Activated B cell treated with CpG ODN at 0.5 μM for 24 hours (primary cell): ENCODE measurements at regions of chr19 and their contacts with region 1.

Region 1: GRCh38 chr19:54959840-54960239 is 6.3 kb upstream of the NLRP2 start:
- DNase-seq: no peak
- ATAC-seq: peak; percentile 76
- H3K4me3 Mint-ChIP-seq: peak overlapping the region; percentile 74
- H3K27ac Mint-ChIP-seq: peak overlapping the region; percentile 82
- H3K4me1 Mint-ChIP-seq: peaks cover 25% of the 10 kb centered on the region
- H3K27me3 Mint-ChIP-seq: no peaks in the 10 kb centered on the region
- CTCF ChIP-seq: no peak

Region 2: DNA sequence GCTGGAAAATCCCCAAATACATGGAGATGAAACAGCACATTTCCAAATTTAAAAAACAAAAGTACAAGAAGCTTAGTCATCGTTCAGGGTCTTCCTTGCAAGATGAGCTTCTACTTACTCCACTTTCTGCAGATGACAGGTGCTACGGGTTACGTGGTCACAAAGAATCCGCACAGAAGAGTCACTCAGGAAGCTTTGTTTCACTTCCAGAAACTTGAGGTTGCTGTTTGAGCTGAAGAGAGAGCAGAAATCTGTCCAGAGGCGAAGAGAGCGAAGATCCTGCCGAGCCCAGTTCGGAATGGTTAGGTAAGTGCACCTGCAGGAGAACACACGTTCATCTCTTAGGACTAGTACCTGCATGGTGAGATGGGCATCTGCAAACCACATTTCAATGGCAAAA is 21.9 kb before region 1 on chr19:
- CTCF ChIA-PET with region 1: no interaction called
- POLR2A ChIA-PET with region 1: interaction called, 13 read pairs
- intact Hi-C with region 1: no loop called
- DNase-seq: no peak
- ATAC-seq: peak; percentile 67
- H3K4me3 Mint-ChIP-seq: peak overlapping the region; percentile 44
- H3K27ac Mint-ChIP-seq: peak overlapping the region; percentile 68
- H3K4me1 Mint-ChIP-seq: peaks cover 15% of the 10 kb centered on the region
- H3K27me3 Mint-ChIP-seq: peaks cover 10% of the 10 kb centered on the region
- CTCF ChIP-seq: no peak

Region 3: DNA sequence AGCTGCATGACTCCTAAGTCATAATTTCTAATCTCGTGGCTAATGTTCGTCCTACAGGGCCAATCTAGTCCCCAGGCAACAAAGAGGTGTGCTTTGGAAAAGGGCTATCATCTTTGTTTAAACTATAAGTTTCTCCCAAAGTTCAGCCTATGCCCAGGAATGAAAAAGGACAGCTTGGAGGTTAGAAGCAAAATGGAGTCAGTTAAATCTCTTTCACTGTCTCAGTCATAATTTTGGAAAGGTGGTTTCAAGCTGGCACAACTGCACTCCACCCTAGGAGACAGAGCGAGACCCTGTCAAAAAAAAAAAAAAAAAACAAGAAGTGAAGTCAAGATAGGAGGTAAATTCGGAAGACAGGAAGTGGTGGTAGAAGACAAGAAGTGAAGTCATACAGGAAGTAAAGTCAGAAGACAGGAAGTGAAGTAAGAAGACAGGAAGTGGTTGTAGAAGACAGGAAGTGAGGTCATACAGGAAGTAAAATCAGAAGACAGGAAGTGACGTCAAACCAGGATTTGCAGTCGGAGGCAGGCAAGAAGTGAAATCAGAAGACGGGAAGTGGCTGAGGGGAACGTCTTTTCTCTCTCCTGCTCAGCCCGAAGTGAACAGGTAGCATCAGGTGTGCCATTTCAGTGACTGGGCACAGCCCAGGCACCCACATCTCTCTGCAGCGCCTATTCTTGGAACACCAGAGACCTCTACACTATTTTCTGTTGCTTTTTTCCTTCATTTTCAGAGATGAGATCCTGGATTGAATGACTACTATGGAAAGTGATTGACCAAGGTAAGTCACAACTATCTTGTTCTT is 46.0 kb after region 1 on chr19:
- CTCF ChIA-PET with region 1: no interaction called
- POLR2A ChIA-PET with region 1: no interaction called
- intact Hi-C with region 1: loop called (anchors 2 kb)
- DNase-seq: peak; percentile 18
- ATAC-seq: peak; percentile 84
- H3K4me3 Mint-ChIP-seq: peak overlapping the region; percentile 87
- H3K27ac Mint-ChIP-seq: peak overlapping the region; percentile 88
- H3K4me1 Mint-ChIP-seq: peaks cover 19% of the 10 kb centered on the region
- H3K27me3 Mint-ChIP-seq: peaks cover 12% of the 10 kb centered on the region
- CTCF ChIP-seq: no peak

Region 4: GRCh38 chr19:55325172-55325571 is 365.3 kb after region 1 on chr19 and contains the start of gene TMEM150B:
- CTCF ChIA-PET with region 1: no interaction called
- POLR2A ChIA-PET with region 1: no interaction called
- intact Hi-C with region 1: no loop called
- DNase-seq: no peak
- ATAC-seq: no peak
- H3K4me3 Mint-ChIP-seq: no peak within 1 kb of the TSS
- H3K27ac Mint-ChIP-seq: no peak within 1 kb of the TSS
- H3K4me1 Mint-ChIP-seq: no peaks in the 10 kb centered on the region
- H3K27me3 Mint-ChIP-seq: peaks cover 30% of the 10 kb centered on the region
- CTCF ChIP-seq: no peak
- total RNA-seq, gene TMEM150B: not detected in 2 replicates